ENCODE measurements at regions of chr12 and their contacts with region 1.

Region 1: GRCh38 chr12:87801860-87802720 is 227.1 kb downstream of the C12orf50 start:
- DNase-seq: no peak
- H3K4me3 ChIP-seq: no peak overlapping the region
- H3K27ac ChIP-seq: peak overlapping the region in 1 of 2 donors; percentile 33
- H3K4me1 ChIP-seq: peaks cover 0 to 49% (median 6%) of the 10 kb centered on the region in 4 donors
- H3K27me3 ChIP-seq: no peaks in the 10 kb centered on the region
- CTCF ChIP-seq: no peak

Region 2: DNA sequence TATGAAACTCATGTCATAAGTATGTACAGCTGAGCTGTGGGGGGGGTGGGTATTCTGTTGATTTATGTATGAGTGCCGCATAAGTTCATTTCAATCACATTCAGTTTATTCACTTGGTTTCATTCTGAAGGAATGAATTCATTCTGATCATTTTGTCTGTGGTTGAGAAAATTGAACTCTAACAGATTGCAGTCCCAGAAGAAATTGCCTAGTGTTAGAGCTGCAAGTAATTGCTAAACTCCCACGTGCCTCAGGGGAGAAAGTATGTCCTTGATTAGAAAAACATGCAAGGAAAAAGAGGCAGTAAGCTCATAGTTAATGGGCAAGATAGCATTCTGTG is 1103.5 kb before region 1 on chr12:
- intact Hi-C with region 1: no loop called
- DNase-seq: no peak
- H3K4me3 ChIP-seq: no peak overlapping the region
- H3K27ac ChIP-seq: no peak overlapping the region
- H3K4me1 ChIP-seq: no peaks in the 10 kb centered on the region
- H3K27me3 ChIP-seq: no peaks in the 10 kb centered on the region
- CTCF ChIP-seq: no peak

Region 3: DNA sequence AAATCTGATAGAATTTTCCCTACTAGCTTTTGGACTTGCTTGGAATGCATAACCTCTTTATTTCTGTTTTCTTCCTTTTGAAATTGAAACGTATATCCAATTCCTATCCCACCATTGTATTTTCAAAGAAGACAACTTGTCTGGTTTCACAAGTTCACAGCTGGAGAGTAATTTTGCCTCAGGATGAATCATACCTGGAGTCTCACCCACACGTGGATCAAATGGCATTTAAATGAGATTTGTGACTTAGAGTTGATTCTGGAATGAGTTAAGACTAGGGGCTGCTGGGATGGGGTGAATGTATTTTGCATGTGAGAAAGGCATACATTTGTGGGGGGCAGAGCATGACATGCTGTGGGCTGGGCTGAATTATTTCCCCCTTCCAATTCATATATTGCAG is 1029.4 kb before region 1 on chr12:
- intact Hi-C with region 1: loop called (anchors 10 kb)
- DNase-seq: no peak
- H3K4me3 ChIP-seq: no peak overlapping the region
- H3K27ac ChIP-seq: no peak overlapping the region
- H3K4me1 ChIP-seq: peaks cover 0 to 18% (median 5%) of the 10 kb centered on the region in 4 donors
- H3K27me3 ChIP-seq: no peaks in the 10 kb centered on the region
- CTCF ChIP-seq: no peak

Region 4: GRCh38 chr12:87760943-87761342 is 41.1 kb before region 1 on chr12:
- intact Hi-C with region 1: no loop called
- DNase-seq: no peak
- H3K4me3 ChIP-seq: no peak overlapping the region
- H3K27ac ChIP-seq: no peak overlapping the region
- H3K4me1 ChIP-seq: no peaks in the 10 kb centered on the region
- H3K27me3 ChIP-seq: no peaks in the 10 kb centered on the region
- CTCF ChIP-seq: no peak

Region 5: DNA sequence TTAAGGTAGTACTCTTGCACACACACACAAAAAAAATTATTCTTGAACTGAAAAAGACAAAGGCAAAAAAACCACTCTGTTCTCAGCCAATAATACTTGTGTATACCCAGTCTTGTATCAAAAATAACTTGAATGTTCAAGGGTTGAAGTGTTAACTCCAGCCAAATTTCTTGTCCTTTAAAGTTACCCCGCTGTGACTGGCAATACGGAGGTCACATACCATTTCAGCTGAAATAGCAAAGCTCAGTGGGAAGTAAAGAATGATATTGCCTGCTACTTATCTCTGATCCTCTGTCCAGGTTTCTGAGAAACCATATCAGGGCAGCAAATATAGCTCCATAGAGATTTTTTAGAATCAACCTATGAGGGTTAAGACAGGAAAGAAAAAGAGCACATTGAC is 59.7 kb after region 1 on chr12:
- intact Hi-C with region 1: no loop called
- DNase-seq: no peak
- H3K4me3 ChIP-seq: no peak overlapping the region
- H3K27ac ChIP-seq: no peak overlapping the region
- H3K4me1 ChIP-seq: peaks cover 0 to 13% (median 0%) of the 10 kb centered on the region in 4 donors
- H3K27me3 ChIP-seq: no peaks in the 10 kb centered on the region
- CTCF ChIP-seq: no peak

Region 6: GRCh38 chr12:87901457-87901856 is 99.4 kb after region 1 on chr12:
- intact Hi-C with region 1: no loop called
- DNase-seq: no peak
- H3K4me3 ChIP-seq: no peak overlapping the region
- H3K27ac ChIP-seq: no peak overlapping the region
- H3K4me1 ChIP-seq: no peaks in the 10 kb centered on the region
- H3K27me3 ChIP-seq: no peaks in the 10 kb centered on the region
- CTCF ChIP-seq: no peak

Measured in tibial artery (tissue), 4 donors.